ENCODE measurements at regions of chr1 and their contacts with region 1.

Region 1: DNA sequence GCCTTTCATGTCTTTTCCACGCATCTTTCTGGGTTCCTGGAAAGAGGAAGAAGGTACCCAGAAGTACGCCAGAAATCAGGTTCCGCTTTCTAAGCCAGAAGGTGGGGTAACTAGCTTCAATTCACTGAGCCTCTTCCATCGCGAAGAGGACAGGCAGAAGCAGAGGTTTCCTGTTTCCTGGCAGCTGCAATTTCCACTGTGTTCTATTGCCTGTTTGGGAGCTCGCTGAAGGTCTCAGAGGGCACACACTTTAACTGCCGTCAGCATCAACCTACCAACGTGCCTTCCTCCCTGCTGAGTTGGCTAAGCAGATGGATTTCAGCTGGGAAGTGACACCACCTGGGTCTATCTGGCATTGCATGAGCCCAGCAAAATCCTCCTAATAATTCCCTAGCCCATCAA is 10.0 kb downstream of the NCF2 start:
- DNase-seq: peak; percentile 77
- H3K4me3 Mint-ChIP-seq: peak overlapping the region; percentile 61
- H3K27ac Mint-ChIP-seq: peak overlapping the region; percentile 84
- H3K4me1 Mint-ChIP-seq: peaks cover 28% of the 10 kb centered on the region
- H3K27me3 Mint-ChIP-seq: no peaks in the 10 kb centered on the region

Region 2: DNA sequence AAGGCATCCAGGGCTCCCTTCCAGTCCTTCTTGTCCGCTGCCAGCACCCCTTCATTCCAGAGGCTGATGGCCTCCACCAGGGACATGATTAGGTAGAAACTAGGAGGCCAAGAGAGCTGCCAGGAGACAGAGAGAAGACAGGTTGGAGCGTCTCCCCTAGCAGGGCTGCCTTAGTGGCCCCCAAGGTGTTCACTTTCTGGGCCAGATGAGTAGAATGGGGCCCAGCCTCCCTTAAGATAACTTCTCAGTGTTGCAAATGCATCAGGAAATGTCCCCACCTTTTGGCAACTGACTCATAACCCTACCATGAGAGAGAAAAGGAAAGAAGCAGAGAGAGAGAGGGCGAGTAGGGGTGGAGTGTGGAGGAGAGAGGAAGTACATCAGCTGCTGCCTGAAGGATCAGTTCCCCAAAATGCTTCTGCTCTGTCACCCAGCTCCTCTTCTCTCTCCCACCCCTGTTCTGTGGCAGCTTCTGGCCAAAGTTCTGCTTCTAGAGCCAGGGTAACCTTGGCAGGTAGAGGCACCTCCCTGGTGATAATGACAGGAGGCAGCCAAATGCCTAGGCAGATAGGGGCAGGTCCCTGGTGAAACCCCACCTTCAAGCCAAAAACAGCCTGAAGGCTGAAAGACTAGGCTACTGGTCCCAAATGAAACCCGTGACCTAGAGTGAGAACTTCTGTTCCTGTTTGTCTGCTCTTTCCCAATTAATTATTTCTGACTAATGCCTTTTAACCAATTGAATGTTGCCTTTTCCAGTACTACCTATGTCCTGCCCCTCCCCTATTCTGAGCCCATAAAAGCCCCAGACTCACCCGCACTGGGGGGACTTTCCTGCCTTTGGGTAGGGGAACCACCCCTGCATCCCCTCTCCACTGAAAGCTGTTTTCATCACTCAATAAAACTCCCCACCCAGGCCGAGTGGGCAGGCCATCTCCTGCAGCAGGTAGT is 10.2 kb after region 1 on chr1 and contains the start of gene NCF2:
- intact Hi-C with region 1: loop called (anchors 1 kb)
- DNase-seq: peak; percentile 89
- H3K4me3 Mint-ChIP-seq: peak within 1 kb of the TSS; percentile 63
- H3K27ac Mint-ChIP-seq: peak within 1 kb of the TSS; percentile 75
- H3K4me1 Mint-ChIP-seq: peaks cover 44% of the 10 kb centered on the region
- H3K27me3 Mint-ChIP-seq: no peaks in the 10 kb centered on the region
- total RNA-seq, gene NCF2: 5.3 and 6.2 TPM in 2 replicates